Transverse colon (tissue), 4 donors: ENCODE measurements at regions of chr9 and their contacts with region 1.

Region 1: DNA sequence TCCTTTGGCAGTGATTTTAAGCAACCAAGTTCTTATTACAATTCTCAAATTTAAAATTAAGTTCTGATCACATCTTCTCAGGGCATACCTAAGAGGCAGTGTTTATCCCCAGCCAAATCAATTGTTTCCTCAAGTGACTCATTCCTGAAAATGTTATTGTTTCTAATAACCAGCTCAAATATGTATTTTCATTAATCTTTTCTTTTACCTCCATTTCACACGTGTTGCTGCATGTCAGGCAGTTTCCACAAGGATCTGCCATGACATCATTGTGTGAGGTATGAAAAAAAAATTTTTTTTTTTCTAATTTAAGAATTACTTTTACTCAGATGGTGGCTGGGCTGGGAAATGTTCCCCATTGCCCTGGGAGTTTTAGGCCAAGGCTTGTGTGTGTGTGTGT is 113.0 kb upstream of the NTRK2 start:
- DNase-seq: no peak
- H3K4me3 ChIP-seq: no peak overlapping the region
- H3K27ac ChIP-seq: no peak overlapping the region
- H3K4me1 ChIP-seq: no peaks in the 10 kb centered on the region
- H3K27me3 ChIP-seq: no peaks in the 10 kb centered on the region
- CTCF ChIP-seq: no peak
- EP300 ChIP-seq: no peak
- POLR2A ChIP-seq: no peak

Region 2: GRCh38 chr9:84604223-84604622 is 47.7 kb after region 1 on chr9:
- in situ Hi-C with region 1: no loop called
- intact Hi-C with region 1: loop called (anchors 1 kb)
- DNase-seq: no peak
- H3K4me3 ChIP-seq: no peak overlapping the region
- H3K27ac ChIP-seq: no peak overlapping the region
- H3K4me1 ChIP-seq: no peaks in the 10 kb centered on the region
- H3K27me3 ChIP-seq: no peaks in the 10 kb centered on the region
- CTCF ChIP-seq: no peak
- EP300 ChIP-seq: no peak
- POLR2A ChIP-seq: no peak

Region 3: DNA sequence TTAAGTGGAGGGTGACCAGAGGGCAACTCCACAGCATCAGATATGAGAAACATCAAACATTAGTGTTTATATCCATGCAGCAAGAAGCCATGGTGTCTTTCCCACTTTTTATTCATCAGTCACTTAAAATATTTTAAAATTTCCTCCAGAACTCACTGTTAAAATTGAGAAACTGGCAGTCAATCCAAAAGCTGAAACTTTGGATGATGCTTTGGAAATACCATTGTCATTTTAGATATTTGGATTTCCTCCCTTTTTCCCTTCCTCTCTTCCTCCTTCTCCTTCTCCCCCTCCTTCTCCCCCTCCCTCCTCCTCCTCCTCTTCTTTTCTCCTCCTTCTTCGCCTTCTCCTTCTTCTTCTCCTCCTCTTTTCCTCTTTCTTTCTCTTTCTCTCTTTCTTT is 79.9 kb after region 1 on chr9:
- in situ Hi-C with region 1: no loop called
- intact Hi-C with region 1: no loop called
- DNase-seq: no peak
- H3K4me3 ChIP-seq: no peak overlapping the region
- H3K27ac ChIP-seq: no peak overlapping the region
- H3K4me1 ChIP-seq: no peaks in the 10 kb centered on the region
- H3K27me3 ChIP-seq: no peaks in the 10 kb centered on the region
- CTCF ChIP-seq: no peak
- EP300 ChIP-seq: no peak
- POLR2A ChIP-seq: no peak

Region 4: GRCh38 chr9:84711902-84712301 is 155.3 kb after region 1 on chr9:
- in situ Hi-C with region 1: no loop called
- intact Hi-C with region 1: no loop called
- DNase-seq: peak; percentile 34
- H3K4me3 ChIP-seq: no peak overlapping the region
- H3K27ac ChIP-seq: no peak overlapping the region
- H3K4me1 ChIP-seq: no peaks in the 10 kb centered on the region
- H3K27me3 ChIP-seq: no peaks in the 10 kb centered on the region
- CTCF ChIP-seq: no peak
- EP300 ChIP-seq: no peak
- POLR2A ChIP-seq: no peak